MCF 10A (cell line): ENCODE measurements at regions of chrX and their contacts with region 1.

Region 1: GRCh38 chrX:71068049-71068763 is at the start of gene SNX12:
- DNase-seq: peak; percentile 89
- H3K4me3 Mint-ChIP-seq: peak within 1 kb of the TSS; percentile 99
- H3K27ac Mint-ChIP-seq: peak within 1 kb of the TSS; percentile 93
- H3K4me1 Mint-ChIP-seq: peaks cover 17% of the 10 kb centered on the region
- H3K27me3 Mint-ChIP-seq: peaks cover 33% of the 10 kb centered on the region
- CTCF ChIP-seq: no peak
- total RNA-seq, gene SNX12: 67.0 and 81.3 TPM in 2 replicates

Region 2: DNA sequence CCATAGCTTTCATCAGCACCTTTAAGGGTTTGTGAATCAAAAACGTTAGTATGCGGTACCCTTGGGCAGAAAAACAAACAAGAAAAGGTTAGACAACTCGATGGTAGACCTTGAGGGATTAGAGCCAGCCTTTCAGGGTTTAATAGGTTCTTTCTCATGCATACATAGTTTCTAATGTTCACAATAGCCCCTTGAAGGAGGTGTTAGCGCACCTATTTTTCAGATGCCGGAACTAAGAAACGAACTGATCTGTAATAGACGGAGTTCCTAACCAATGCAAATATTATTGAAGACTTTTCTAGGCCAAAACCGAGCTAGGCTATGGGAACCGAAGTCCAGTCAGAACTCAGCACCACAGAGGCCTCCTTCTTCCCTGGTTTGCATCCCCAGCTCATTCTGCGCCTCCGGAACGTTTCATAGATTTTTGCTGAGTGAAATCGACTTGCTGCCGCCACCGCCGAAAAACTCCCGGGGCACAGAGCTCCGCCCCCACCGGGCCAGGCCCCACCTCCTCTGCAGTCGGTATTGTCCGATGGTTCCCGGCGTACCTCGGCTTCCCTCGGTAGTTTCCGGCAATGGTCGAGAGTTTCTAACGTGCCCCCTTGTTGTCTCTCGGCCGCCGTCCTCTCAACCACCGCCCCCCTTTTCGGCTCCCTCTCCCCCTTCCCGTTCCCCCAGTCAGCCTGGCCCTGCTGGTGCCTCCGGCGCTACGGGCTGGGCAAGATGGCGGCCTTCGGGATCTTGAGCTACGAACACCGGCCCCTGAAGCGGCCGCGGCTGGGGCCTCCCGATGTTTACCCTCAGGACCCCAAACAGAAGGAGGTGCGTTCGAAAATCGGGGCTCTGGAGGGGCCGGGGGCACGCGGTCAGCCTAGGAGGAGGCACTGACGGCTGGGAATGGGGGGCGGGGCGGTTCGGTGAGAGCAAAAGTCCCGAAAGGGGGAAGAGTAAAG is 50.1 kb after region 1 on chrX and contains the start of gene MED12:
- CTCF ChIA-PET with region 1: interaction called, 4 read pairs
- POLR2A ChIA-PET with region 1: interaction called, 13 read pairs
- intact Hi-C with region 1: no loop called
- DNase-seq: peak; percentile 68
- H3K4me3 Mint-ChIP-seq: peak within 1 kb of the TSS; percentile 79
- H3K27ac Mint-ChIP-seq: peak within 1 kb of the TSS; percentile 73
- H3K4me1 Mint-ChIP-seq: no peaks in the 10 kb centered on the region
- H3K27me3 Mint-ChIP-seq: peaks cover 18% of the 10 kb centered on the region
- CTCF ChIP-seq: no peak
- total RNA-seq, gene MED12: 36.6 and 39.4 TPM in 2 replicates